ENCODE measurements at regions of chr5 and their contacts with region 1.

Region 1: GRCh38 chr5:147887024-147887627 is 8.6 kb downstream of the SCGB3A2 start:
- DNase-seq: peak; percentile 3
- ATAC-seq: no peak
- H3K4me3 ChIP-seq: no peak overlapping the region
- H3K27ac ChIP-seq: no peak overlapping the region
- H3K4me1 ChIP-seq: no peaks in the 10 kb centered on the region
- H3K27me3 ChIP-seq: no peaks in the 10 kb centered on the region
- CTCF ChIP-seq: peak; percentile 28; the same call in 1 of the 2 replicates
- EP300 ChIP-seq: no peak
- POLR2A ChIP-seq: no peak
- RAD21 ChIP-seq: no peak

Region 2: DNA sequence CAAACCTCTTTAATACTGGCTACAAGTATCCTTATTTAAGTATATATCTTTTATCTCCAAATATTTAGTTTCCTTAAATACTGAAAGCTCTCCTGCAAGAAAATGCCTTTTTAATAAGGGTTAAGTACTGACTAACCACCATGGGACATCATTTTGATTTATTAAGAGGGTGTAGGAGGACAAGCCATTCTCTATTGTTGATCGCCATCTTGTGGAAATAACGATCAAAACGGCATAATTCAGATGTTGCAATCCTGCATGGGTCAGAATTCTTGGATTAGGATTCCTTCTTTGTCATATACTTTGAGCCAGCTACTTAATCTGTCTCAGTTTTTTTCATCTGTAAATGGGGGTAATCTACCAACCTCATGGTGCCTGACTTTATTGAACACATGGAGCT is 47.9 kb after region 1 on chr5:
- CTCF ChIA-PET with region 1: interaction called, 3 read pairs
- POLR2A ChIA-PET with region 1: no interaction called
- in situ Hi-C with region 1: no loop called
- intact Hi-C with region 1: loop called (anchors 1 kb)
- DNase-seq: peak; percentile 16
- ATAC-seq: no peak
- H3K4me3 ChIP-seq: no peak overlapping the region
- H3K27ac ChIP-seq: no peak overlapping the region
- H3K4me1 ChIP-seq: no peaks in the 10 kb centered on the region
- H3K27me3 ChIP-seq: no peaks in the 10 kb centered on the region
- CTCF ChIP-seq: peak; percentile 23; the same call in 1 of the 2 replicates
- EP300 ChIP-seq: no peak
- POLR2A ChIP-seq: no peak
- RAD21 ChIP-seq: no peak

Measured in HepG2 (cell line).